ENCODE measurements at regions of chr12 and their contacts with region 1.

Region 1: GRCh38 chr12:128783129-128783574 is 40.6 kb downstream of the SLC15A4 start:
- DNase-seq: peak; percentile 56 to 71 (median 64)
- H3K4me3 ChIP-seq: peak overlapping the region in 1 of 3 experiments; percentile 55
- H3K4me3 Mint-ChIP-seq: peak overlapping the region; percentile 81 to 89
- H3K27ac ChIP-seq: peak overlapping the region; percentile 51 to 76
- H3K27ac Mint-ChIP-seq: peak overlapping the region; percentile 94 to 100 (median 98)
- H3K4me1 ChIP-seq: peaks cover 12 to 16% of the 10 kb centered on the region in 2 donors
- H3K4me1 Mint-ChIP-seq: peaks cover 24% of the 10 kb centered on the region
- H3K27me3 ChIP-seq: no peaks in the 10 kb centered on the region
- H3K27me3 Mint-ChIP-seq: peaks cover 0 to 11% (median 3%) of the 10 kb centered on the region in 3 donors
- CTCF ChIP-seq: no peak

Region 2: DNA sequence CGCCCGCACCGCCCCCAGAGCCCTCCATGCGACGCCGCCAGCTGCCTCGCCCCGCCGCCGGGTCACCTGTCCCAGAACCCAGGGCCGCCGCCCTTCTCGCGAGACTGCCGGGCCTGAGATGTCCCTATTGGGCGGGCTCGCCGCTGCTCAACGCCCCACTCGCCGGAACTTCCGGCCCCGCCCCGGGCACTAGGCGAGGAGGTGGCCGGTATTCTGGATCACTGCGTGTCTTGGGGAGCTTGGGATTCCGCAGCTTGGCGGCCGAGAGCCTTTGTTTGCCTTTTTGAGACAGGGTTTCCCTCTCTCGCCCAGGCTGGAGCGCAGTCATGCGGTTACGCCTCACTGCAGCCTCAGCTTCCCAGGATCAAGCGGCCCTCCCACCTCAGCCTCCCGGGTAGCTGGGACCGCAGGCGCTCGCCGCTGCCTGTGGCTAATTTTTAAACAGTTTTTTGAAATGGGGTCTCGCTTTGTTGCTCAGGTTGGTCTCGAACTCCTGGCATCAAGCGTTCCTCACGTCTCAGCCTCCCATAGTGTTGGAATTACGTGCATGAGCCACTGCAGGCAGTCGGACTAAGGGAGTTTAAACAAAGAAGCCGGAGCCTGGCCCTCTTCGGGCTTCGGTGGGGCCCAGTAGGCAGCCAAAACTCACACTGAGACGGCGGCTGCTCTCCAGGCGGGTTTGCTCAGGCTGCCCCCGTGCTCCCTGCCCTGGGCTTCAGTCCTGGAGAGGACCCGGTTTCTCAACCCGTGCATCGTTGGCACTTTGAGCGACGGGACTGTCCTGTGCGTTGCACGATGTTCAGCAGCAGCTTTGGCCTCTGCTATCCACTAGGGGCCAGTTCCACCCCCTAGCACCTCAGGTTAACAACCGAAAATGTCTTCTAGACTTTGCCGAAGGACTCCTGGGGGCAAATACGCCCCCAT is 41.0 kb after region 1 on chr12 and contains the start of gene SLC15A4:
- intact Hi-C with region 1: loop called in 1 of 2 experiments (anchors 5 kb)
- DNase-seq: peak; percentile 88 to 91 (median 89)
- H3K4me3 ChIP-seq: peak within 1 kb of the TSS; percentile 60 to 82 (median 71)
- H3K4me3 Mint-ChIP-seq: peak within 1 kb of the TSS; percentile 86 to 90
- H3K27ac ChIP-seq: peak within 1 kb of the TSS; percentile 85 to 91
- H3K27ac Mint-ChIP-seq: peak within 1 kb of the TSS; percentile 86 to 96 (median 93)
- H3K4me1 ChIP-seq: peaks cover 59 to 60% of the 10 kb centered on the region in 2 donors
- H3K4me1 Mint-ChIP-seq: peaks cover 49% of the 10 kb centered on the region
- H3K27me3 ChIP-seq: no peaks in the 10 kb centered on the region
- H3K27me3 Mint-ChIP-seq: peaks cover 0 to 2% (median 1%) of the 10 kb centered on the region in 3 donors
- CTCF ChIP-seq: no peak
- polyA plus RNA-seq, gene SLC15A4: 5.4 to 46.6 (median 14.8) TPM

Region 3: DNA sequence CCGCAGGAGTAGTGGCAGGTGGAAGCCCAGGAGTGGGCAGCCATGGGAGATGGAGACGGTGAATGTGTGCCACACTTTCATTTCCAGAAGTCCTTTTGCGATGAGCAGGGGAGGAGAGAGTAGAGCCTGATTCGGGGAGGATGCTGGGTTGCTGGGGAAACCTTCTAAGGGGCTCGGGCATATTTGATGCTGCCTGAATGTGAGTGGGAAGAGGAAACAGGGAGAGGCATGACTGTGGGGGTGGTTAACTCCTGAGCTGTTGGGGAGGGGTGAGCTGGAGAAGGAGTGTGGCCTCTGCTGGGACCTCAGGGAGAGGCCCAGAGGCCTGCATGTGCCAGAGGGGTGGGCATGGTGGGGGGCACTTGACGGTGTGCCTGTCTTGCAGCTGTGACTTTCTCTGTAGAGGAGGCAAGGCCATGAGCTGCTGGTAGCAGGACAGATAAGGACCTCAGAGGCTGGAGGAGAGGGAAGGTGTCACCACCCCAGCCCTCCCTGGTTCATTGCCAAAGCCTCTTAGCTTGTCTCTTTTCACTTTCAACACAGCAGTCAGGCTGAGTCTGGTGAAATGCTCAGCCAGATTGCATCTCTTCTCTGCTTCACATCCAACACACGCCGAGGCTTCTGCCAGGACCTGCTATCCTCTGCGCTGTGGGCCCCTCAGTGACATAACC is 81.5 kb after region 1 on chr12:
- intact Hi-C with region 1: loop called in 1 of 2 experiments (anchors 5 kb)
- DNase-seq: no peak
- H3K4me3 ChIP-seq: no peak overlapping the region
- H3K4me3 Mint-ChIP-seq: no peak overlapping the region
- H3K27ac ChIP-seq: peak overlapping the region in 1 of 2 donors; percentile 48
- H3K27ac Mint-ChIP-seq: peak overlapping the region; percentile 47 to 82 (median 79)
- H3K4me1 ChIP-seq: peaks cover 0 to 8% of the 10 kb centered on the region in 2 donors
- H3K4me1 Mint-ChIP-seq: peaks cover 33% of the 10 kb centered on the region
- H3K27me3 ChIP-seq: no peaks in the 10 kb centered on the region
- H3K27me3 Mint-ChIP-seq: peaks cover 0 to 8% (median 4%) of the 10 kb centered on the region in 3 donors
- CTCF ChIP-seq: no peak

Region 4: GRCh38 chr12:128920468-128920867 is 137.3 kb after region 1 on chr12:
- intact Hi-C with region 1: loop called in 1 of 2 experiments (anchors 5 kb)
- DNase-seq: peak; percentile 69 to 85 (median 80)
- H3K4me3 ChIP-seq: peak overlapping the region in 1 of 3 experiments; percentile 25
- H3K4me3 Mint-ChIP-seq: peak overlapping the region in 1 of 2 donors; percentile 72
- H3K27ac ChIP-seq: peak overlapping the region; percentile 41 to 64
- H3K27ac Mint-ChIP-seq: peak overlapping the region; percentile 77 to 94 (median 85)
- H3K4me1 ChIP-seq: peaks cover 11 to 18% of the 10 kb centered on the region in 2 donors
- H3K4me1 Mint-ChIP-seq: peaks cover 25% of the 10 kb centered on the region
- H3K27me3 ChIP-seq: no peaks in the 10 kb centered on the region
- H3K27me3 Mint-ChIP-seq: peaks cover 2 to 3% (median 3%) of the 10 kb centered on the region in 3 donors
- CTCF ChIP-seq: no peak